ENCODE measurements at regions of chr11 and their contacts with region 1.

Region 1: DNA sequence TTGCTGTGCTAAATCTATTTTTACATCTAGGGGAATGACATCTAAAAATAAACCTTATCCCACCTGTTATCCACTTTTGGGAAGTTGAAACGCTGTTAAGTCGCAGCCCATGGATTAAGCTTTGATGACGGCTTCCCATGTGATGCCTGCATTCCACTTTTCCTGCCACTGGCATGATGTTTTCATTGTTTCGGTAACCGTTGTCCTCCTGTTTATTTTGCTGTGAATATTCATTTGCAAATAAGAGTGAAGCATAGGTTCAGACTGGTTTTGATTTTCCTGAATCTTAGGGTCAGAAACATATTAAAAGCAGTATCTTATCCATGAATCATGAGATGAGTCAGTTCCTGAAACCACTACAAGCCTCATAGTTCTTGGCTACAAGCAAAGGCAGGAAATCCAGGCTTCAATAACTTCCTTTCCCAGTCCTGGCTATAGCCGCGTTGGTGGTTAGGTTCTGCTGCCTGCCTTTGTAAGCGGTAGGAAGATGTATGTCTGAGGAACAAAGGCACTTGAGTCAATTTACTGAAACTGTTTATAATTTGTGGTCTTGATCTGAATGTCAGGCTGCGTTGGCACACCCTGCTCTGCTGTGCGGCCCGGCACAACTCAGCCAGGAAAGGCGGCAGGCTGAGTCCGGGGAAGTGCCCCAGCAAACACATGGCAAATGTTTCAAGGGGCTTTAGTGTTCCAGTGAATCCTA is 19.4 kb downstream of the TEAD1 start:
- DNase-seq: peak; percentile 54
- H3K4me3 ChIP-seq: peak overlapping the region in 2 of 4 donors; percentile 4 to 13
- H3K27ac ChIP-seq: peak overlapping the region; percentile 88 to 94 (median 93)
- H3K4me1 ChIP-seq: peaks cover 28 to 77% (median 43%) of the 10 kb centered on the region in 4 donors
- H3K27me3 ChIP-seq: no peaks in the 10 kb centered on the region
- CTCF ChIP-seq: no peak
- EP300 ChIP-seq: no peak
- POLR2A ChIP-seq: no peak

Region 2: DNA sequence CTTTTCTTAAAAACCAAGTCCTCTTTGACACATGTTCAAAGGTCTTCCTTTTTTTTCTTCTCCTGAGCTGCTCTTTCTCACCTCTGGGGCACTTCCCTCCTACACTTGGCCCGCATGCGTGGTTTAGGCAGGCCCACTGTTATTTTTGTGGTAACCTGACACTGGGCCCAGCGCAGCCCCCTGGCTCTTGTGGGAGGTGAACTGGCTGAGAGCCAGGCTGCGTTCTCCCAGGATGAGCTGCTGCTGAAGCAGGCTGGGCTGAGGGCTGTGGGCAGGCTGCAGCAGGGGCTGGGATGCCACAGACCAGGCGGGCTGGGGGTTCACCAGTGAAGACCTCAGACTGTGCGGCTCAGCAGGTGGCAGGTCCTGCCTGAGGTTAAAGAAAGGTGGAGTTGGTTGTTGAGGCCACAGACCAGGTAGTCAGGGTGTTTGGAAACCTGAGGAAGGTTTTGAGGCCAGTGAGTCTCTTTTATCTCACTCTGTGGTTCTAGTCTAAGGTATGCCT is 53.0 kb after region 1 on chr11:
- in situ Hi-C with region 1: no loop called
- intact Hi-C with region 1: loop called (anchors 10 kb)
- DNase-seq: no peak
- H3K4me3 ChIP-seq: no peak overlapping the region
- H3K27ac ChIP-seq: peak overlapping the region in 1 of 4 donors; percentile 20
- H3K4me1 ChIP-seq: peaks cover 0 to 19% (median 7%) of the 10 kb centered on the region in 4 donors
- H3K27me3 ChIP-seq: no peaks in the 10 kb centered on the region
- CTCF ChIP-seq: no peak
- EP300 ChIP-seq: no peak
- POLR2A ChIP-seq: no peak

Region 3: DNA sequence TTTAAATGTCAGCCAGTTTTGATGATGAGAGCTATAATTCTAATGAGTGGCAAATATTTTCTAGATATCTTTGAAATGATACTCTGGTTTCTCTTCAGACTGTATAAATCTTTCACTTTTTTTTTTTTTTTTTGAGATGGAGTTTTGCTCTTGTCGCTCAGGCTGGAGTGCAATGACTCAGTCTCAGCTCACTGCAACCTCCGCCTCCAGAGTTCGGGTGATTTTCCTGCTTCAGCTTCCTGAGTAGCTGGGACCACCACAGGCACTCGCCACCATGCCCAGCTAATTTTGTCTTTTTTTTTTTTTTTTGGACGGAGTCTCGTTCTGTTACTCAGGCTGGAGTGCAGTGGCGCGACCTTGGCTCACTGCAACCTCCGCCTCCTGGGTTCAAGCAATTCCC is 94.2 kb after region 1 on chr11:
- in situ Hi-C with region 1: no loop called
- intact Hi-C with region 1: no loop called
- DNase-seq: no peak
- H3K4me3 ChIP-seq: no peak overlapping the region
- H3K27ac ChIP-seq: no peak overlapping the region
- H3K4me1 ChIP-seq: no peaks in the 10 kb centered on the region
- H3K27me3 ChIP-seq: no peaks in the 10 kb centered on the region
- CTCF ChIP-seq: no peak
- EP300 ChIP-seq: no peak
- POLR2A ChIP-seq: no peak

Region 4: DNA sequence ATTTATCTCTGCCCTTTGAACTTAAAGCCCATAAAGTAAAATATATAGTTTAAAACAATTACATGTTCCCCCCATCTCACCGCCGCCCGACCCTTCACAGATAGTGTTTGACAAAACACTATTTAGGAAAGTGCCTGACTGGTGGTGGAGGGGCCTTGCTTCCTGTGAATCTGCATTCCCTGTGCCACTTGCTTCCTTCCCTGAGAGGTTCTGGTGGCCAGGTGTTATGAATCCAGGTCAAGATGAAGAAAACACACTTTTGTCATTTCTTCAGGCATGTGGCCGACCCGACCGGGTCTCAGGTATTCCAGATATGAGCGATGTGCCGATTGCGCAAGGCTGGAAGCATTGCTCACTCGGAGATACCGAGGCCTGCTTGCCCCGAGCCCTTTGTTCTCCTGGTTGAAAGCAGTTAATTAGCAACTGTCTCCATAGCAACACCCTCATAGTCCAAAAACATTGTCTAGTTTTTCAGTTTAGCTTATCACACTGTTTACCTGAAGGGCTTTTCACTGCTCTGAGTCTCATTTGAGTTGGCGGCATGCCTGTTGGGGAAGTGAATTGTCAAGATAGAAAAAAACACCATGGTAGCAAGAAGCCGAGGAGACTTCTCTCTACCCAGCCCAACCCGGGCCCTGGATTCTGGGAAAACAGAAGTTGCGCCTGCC is 108.9 kb after region 1 on chr11:
- in situ Hi-C with region 1: no loop called
- intact Hi-C with region 1: no loop called
- DNase-seq: peak; percentile 84
- H3K4me3 ChIP-seq: no peak overlapping the region
- H3K27ac ChIP-seq: peak overlapping the region; percentile 82 to 85 (median 84)
- H3K4me1 ChIP-seq: peaks cover 39 to 64% (median 51%) of the 10 kb centered on the region in 4 donors
- H3K27me3 ChIP-seq: no peaks in the 10 kb centered on the region
- CTCF ChIP-seq: no peak
- EP300 ChIP-seq: peak; percentile 53
- POLR2A ChIP-seq: no peak